CD8-positive, alpha-beta T cell (primary cell): ENCODE measurements at regions of chr10 and their contacts with region 1.

Region 1: DNA sequence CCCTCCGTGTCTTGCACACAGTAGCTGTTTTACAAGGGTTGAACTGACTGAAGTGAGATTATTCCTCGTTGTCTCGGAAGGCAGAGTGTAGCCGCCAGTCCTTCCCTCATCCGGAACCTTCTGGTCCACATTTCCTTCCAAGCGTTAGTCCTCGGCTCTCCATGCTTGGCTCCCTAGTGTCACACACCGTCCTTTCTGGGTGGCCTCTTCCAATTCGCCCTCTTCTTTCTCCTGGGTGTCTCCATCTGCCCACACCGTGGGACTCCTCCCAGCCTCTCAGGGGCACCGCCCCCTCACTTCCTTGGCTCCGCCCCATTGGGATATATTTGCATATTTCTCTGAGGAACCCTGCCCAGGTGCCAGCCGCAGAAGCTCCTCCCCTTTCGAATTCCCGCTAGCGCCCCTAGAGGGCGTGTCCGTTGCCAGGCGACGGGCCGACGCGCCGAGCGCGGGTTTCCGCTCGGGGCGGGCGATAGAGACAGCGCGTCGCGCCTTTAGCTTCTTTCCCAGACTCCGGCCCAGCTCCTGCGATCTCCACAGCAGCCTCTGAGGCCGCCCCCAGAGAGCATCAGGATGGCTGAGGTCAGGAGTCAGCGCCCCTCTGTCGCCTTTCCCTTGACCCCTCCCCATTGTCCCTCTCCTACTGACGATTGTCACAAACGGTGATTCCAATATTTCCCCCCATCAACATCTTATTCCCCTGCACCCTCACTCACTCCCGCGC is at the start of gene CFAP58:
- DNase-seq: peak; percentile 76 to 95 (median 89)
- ATAC-seq: peak; percentile 84
- H3K4me3 ChIP-seq: peak within 1 kb of the TSS; percentile 46 to 53
- H3K4me3 Mint-ChIP-seq: peak within 1 kb of the TSS; percentile 44
- H3K27ac ChIP-seq: peak within 1 kb of the TSS in 1 of 2 experiments; percentile 58
- H3K27ac Mint-ChIP-seq: peak within 1 kb of the TSS; percentile 73
- H3K4me1 ChIP-seq: peaks cover 19% of the 10 kb centered on the region
- H3K4me1 Mint-ChIP-seq: peaks cover 2% of the 10 kb centered on the region
- H3K27me3 ChIP-seq: no peaks in the 10 kb centered on the region
- H3K27me3 Mint-ChIP-seq: no peaks in the 10 kb centered on the region
- CTCF ChIP-seq: peak; percentile 74
- total RNA-seq, gene CFAP58: not detected

Region 2: DNA sequence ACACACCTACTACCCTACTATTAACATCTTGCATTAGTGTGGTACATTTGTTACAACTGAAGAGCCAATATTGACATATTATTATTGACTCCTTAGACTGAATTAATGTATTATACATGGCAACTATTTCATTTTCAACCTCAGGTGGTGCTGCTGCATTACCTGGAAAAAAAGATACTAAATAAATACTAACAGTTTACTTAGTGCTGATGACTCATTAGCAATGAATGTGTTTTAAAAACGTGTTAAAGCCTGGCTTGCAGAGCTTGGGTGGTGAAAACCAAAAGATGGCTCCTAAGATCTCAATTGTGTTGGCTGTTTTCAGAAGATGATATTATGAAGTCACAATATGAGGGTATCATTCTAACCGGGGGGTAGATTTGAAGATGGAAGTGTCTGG is 156.1 kb before region 1 on chr10:
- CTCF ChIA-PET with region 1: no interaction called
- POLR2A ChIA-PET with region 1: no interaction called
- intact Hi-C with region 1: no loop called
- DNase-seq: no peak
- ATAC-seq: no peak
- H3K4me3 ChIP-seq: no peak overlapping the region
- H3K4me3 Mint-ChIP-seq: no peak overlapping the region
- H3K27ac ChIP-seq: no peak overlapping the region
- H3K27ac Mint-ChIP-seq: no peak overlapping the region
- H3K4me1 ChIP-seq: no peaks in the 10 kb centered on the region
- H3K4me1 Mint-ChIP-seq: no peaks in the 10 kb centered on the region
- H3K27me3 ChIP-seq: no peaks in the 10 kb centered on the region
- H3K27me3 Mint-ChIP-seq: peaks cover 2% of the 10 kb centered on the region
- CTCF ChIP-seq: no peak

Region 3: DNA sequence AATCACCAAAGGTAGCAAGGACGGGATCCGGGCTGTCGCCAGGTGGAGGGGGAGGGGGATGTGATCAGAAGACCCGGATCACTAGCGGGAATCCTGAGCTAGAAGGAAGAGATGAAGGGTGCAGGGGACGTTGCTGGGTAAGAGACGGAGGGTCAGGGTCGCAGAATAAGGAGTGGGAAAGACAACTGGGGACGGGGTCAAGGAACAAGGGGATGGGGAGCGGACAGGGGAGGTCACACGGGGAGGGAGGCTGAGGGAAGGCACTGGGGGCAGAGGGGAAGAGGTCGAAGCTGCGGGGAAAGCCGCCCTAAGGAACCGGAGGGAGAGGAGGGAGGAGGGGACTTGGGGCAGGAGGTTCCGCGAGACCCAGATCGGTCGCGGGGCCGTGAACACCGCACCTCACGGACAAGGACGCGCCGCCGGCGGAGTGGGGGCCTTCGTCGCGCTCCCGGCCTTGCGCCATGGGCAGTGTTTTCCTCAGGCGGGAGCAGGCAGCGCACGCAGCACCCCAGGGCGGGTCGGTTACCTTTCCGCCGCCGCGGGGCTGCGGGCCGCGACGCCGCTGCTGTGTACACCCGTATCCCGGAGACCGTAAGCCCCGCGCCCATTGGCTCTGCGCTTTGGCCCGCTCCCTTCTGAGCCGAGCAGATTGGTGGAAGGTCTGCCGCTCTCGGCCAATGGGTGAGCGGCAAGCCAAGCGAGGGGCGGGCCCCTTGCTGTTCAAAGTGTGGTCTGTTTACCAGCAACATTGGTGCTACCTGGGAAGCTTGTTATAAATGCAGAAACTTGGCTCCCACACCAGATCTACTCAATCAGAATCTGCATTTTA is 121.5 kb before region 1 on chr10 and contains the start of gene CFAP43:
- CTCF ChIA-PET with region 1: no interaction called
- POLR2A ChIA-PET with region 1: no interaction called
- intact Hi-C with region 1: loop called in 1 of 2 experiments (anchors 1 kb)
- DNase-seq: peak; percentile 98 to 100 (median 99)
- ATAC-seq: peak; percentile 99
- H3K4me3 ChIP-seq: peak within 1 kb of the TSS; percentile 64 to 67
- H3K4me3 Mint-ChIP-seq: peak within 1 kb of the TSS; percentile 87
- H3K27ac ChIP-seq: peak within 1 kb of the TSS in 1 of 2 experiments; percentile 52
- H3K27ac Mint-ChIP-seq: peak within 1 kb of the TSS; percentile 79
- H3K4me1 ChIP-seq: peaks cover 4% of the 10 kb centered on the region
- H3K4me1 Mint-ChIP-seq: peaks cover 10% of the 10 kb centered on the region
- H3K27me3 ChIP-seq: peaks cover 0 to 10% of the 10 kb centered on the region in 2 experiments
- H3K27me3 Mint-ChIP-seq: peaks cover 9% of the 10 kb centered on the region
- CTCF ChIP-seq: no peak
- total RNA-seq, gene CFAP43: not detected

Region 4: DNA sequence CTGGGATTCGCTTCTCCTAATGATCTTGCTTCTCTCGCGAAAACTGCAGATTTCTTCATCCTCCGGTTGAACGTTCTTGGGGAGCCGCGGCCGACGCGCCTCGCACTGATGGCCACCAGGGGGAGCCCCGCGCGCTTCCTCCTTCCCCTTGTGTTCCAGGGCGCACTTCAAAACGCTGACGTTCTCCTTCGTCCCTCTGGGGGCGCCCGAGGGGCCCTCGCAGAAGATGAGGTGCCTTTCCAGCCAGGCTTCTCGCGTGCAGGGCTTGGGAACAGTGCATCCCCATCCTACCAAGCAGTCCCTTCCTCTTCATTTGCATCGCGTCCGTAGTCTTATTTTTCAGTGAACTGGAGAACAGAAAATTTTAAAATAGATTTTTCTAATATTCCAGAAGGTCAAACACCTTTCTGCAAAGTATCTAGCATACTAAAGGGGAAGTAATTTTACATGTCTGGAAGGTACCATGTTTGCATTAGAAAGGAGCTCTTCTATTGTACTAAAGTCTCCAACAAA is 62.0 kb before region 1 on chr10:
- CTCF ChIA-PET with region 1: interaction called, 496 read pairs
- POLR2A ChIA-PET with region 1: interaction called, 5 read pairs
- intact Hi-C with region 1: loop called (anchors 1 kb)
- DNase-seq: peak; percentile 80 to 93 (median 89)
- ATAC-seq: peak; percentile 100
- H3K4me3 ChIP-seq: no peak overlapping the region
- H3K4me3 Mint-ChIP-seq: no peak overlapping the region
- H3K27ac ChIP-seq: no peak overlapping the region
- H3K27ac Mint-ChIP-seq: no peak overlapping the region
- H3K4me1 ChIP-seq: peaks cover 3% of the 10 kb centered on the region
- H3K4me1 Mint-ChIP-seq: peaks cover 5% of the 10 kb centered on the region
- H3K27me3 ChIP-seq: no peaks in the 10 kb centered on the region
- H3K27me3 Mint-ChIP-seq: peaks cover 20% of the 10 kb centered on the region
- CTCF ChIP-seq: peak; percentile 99

Region 5: GRCh38 chr10:104308439-104308903 is 45.0 kb before region 1 on chr10:
- CTCF ChIA-PET with region 1: interaction called, 309 read pairs
- POLR2A ChIA-PET with region 1: interaction called, 17 read pairs
- intact Hi-C with region 1: loop called (anchors 1 kb)
- DNase-seq: peak in 4 of 9 experiments; percentile 40 to 73 (median 54)
- ATAC-seq: peak; percentile 57
- H3K4me3 ChIP-seq: no peak overlapping the region
- H3K4me3 Mint-ChIP-seq: peak overlapping the region; percentile 61
- H3K27ac ChIP-seq: peak overlapping the region in 1 of 2 experiments; percentile 36
- H3K27ac Mint-ChIP-seq: peak overlapping the region; percentile 69
- H3K4me1 ChIP-seq: peaks cover 59% of the 10 kb centered on the region
- H3K4me1 Mint-ChIP-seq: peaks cover 70% of the 10 kb centered on the region
- H3K27me3 ChIP-seq: no peaks in the 10 kb centered on the region
- H3K27me3 Mint-ChIP-seq: no peaks in the 10 kb centered on the region
- CTCF ChIP-seq: no peak

Region 6: DNA sequence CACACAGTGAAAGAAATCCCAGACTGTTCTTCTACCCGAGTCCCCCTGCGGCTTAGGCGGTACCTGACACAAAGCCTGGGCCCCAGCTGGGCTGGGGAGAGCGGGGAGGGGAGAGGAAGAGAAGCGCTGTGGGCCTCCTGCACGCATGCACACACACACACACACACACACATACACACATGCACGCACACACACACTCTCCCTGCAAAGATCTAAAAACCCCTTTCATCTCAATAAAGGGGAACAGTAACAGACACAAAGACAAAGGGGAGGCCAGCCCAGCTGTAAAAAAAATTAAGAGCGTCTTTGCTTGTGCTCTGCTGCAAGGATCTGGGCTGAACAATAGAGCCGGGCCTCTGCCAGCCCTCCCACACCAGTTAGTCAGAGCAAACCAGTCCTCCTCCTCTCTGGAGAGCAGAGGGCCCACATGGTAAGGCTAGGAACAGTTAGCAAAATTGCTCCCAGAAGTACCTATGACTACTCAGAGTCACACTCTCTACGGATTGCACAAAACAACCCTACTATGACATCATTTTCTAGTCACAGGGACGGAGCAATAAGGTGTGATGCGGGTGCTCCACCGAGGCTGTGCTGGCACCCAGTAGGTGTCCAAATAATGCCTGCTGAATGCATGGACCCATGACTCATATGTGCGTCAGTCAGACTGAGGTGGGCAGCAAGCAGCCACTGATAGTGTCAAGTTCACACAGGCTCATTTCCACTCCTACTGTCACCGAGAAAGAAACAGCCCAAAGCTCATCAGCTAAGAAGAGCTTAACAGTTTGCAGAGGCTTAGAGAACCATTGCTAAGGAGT is 24.4 kb before region 1 on chr10:
- CTCF ChIA-PET with region 1: interaction called, 30 read pairs
- POLR2A ChIA-PET with region 1: interaction called, 5 read pairs
- intact Hi-C with region 1: loop called (anchors 1 to 2 kb)
- DNase-seq: peak; percentile 51 to 96 (median 79)
- ATAC-seq: peak; percentile 71
- H3K4me3 ChIP-seq: peak overlapping the region; percentile 9 to 39
- H3K4me3 Mint-ChIP-seq: peak overlapping the region; percentile 78
- H3K27ac ChIP-seq: peak overlapping the region; percentile 67 to 79
- H3K27ac Mint-ChIP-seq: peak overlapping the region; percentile 97
- H3K4me1 ChIP-seq: peaks cover 95% of the 10 kb centered on the region
- H3K4me1 Mint-ChIP-seq: peaks cover 98% of the 10 kb centered on the region
- H3K27me3 ChIP-seq: no peaks in the 10 kb centered on the region
- H3K27me3 Mint-ChIP-seq: no peaks in the 10 kb centered on the region
- CTCF ChIP-seq: no peak

Region 7: GRCh38 chr10:104337974-104338735 is 15.3 kb before region 1 on chr10 and contains the start of gene ITPRIP:
- CTCF ChIA-PET with region 1: interaction called, 33 read pairs
- POLR2A ChIA-PET with region 1: interaction called, 18 read pairs
- intact Hi-C with region 1: loop called (anchors 1 kb)
- DNase-seq: peak; percentile 47 to 89 (median 76)
- ATAC-seq: peak; percentile 67
- H3K4me3 ChIP-seq: peak within 1 kb of the TSS; percentile 92 to 98
- H3K4me3 Mint-ChIP-seq: peak within 1 kb of the TSS; percentile 93
- H3K27ac ChIP-seq: peak within 1 kb of the TSS; percentile 92 to 93
- H3K27ac Mint-ChIP-seq: peak within 1 kb of the TSS; percentile 97
- H3K4me1 ChIP-seq: peaks cover 46% of the 10 kb centered on the region
- H3K4me1 Mint-ChIP-seq: peaks cover 54% of the 10 kb centered on the region
- H3K27me3 ChIP-seq: no peaks in the 10 kb centered on the region
- H3K27me3 Mint-ChIP-seq: no peaks in the 10 kb centered on the region
- CTCF ChIP-seq: no peak
- total RNA-seq, gene ITPRIP: 212 to 214 TPM

Region 8: DNA sequence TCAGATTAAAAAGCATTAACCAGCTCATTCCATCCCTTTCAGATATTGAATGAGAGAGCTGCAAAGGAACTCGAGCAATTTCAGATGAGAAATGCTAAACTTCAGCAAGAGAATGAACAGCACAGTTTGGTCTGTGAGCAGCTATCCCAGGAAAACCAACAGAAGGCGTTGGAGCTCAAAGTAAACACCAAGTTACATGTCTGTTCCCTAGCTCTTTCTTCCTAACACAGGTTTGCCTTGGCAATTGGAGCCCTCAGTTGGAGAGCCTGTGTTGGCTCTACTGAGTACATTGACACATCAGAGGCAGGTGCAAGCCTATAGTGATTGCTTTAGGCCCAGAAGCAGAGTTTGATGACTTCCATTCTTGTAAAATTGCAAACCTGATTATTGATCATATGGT is 14.9 kb after region 1 on chr10:
- CTCF ChIA-PET with region 1: interaction called, 40 read pairs
- POLR2A ChIA-PET with region 1: interaction called, 3 read pairs
- intact Hi-C with region 1: no loop called
- DNase-seq: no peak
- ATAC-seq: no peak
- H3K4me3 ChIP-seq: no peak overlapping the region
- H3K4me3 Mint-ChIP-seq: no peak overlapping the region
- H3K27ac ChIP-seq: no peak overlapping the region
- H3K27ac Mint-ChIP-seq: no peak overlapping the region
- H3K4me1 ChIP-seq: no peaks in the 10 kb centered on the region
- H3K4me1 Mint-ChIP-seq: no peaks in the 10 kb centered on the region
- H3K27me3 ChIP-seq: no peaks in the 10 kb centered on the region
- H3K27me3 Mint-ChIP-seq: peaks cover 37% of the 10 kb centered on the region
- CTCF ChIP-seq: no peak